Activated T-helper 1 cell treated with anti-CD3 and anti-CD28 coated beads, Interleukin-12 subunit alpha, Interleukin-12 subunit beta, Interleukin-2, Interleukin-4 antibody, amounts not matched to agents 30 ng/mL and 10 ng/mL and 1 ng/mL, durations not matched to agents 14 hours and 24 hours and 36 hours (primary cell): ENCODE measurements at regions of chr4 and their contacts with region 1.

Region 1: DNA sequence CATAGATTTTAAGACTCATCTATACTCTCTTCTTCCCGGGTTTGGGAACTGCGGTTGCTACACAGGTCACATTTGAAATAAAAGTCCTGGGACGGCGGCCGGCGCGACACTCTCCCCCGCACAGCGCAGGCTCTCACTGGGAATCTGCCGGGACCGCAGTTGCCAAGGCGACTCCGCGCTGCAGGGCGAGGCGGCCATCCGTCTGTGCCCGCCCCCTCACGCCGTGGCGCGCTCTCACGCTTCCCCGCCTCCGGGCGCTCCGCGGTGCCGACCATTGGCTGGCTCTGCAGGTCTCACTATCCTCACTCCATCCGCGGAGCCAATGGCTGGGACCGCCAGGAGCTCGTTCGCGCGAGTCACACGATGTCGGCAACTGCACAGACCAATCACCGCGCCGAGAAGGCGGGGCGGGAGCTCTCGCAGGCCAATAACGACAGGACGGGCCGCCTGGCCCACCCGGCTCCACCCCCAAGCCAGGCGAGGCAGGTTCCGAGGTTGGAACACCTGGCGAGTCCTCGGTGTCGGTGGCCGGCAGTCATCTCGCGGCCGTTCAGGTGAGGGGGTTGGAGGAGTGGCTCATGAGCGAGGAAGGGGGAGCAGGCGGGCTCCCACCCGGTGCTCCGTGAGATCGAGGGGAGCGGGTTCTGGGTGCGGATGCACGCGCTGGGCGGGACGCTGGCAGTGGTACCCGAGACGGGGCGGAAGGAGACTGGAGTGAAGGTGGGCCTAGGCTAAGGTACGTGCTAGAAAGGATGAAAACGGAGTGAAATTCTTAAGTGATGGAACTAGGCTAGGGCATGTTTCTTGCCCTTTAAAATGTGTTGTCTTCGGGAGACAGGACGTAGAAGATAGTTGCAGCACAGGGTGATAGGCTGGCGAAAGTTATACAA is at the start of gene MSMO1:
- DNase-seq: peak; percentile 99
- H3K4me3 Mint-ChIP-seq: no peak within 1 kb of the TSS
- H3K27ac Mint-ChIP-seq: no peak within 1 kb of the TSS
- H3K4me1 Mint-ChIP-seq: peaks cover 40% of the 10 kb centered on the region
- H3K27me3 Mint-ChIP-seq: no peaks in the 10 kb centered on the region
- total RNA-seq, gene MSMO1: 74.1 and 93.1 TPM in 2 replicates

Region 2: GRCh38 chr4:163494360-163495162 is 1832.9 kb before region 1 on chr4 and contains the start of gene TMA16:
- intact Hi-C with region 1: loop called (anchors 10 kb)
- DNase-seq: peak; percentile 84
- H3K4me3 Mint-ChIP-seq: peak within 1 kb of the TSS; percentile 90
- H3K27ac Mint-ChIP-seq: peak within 1 kb of the TSS; percentile 98
- H3K4me1 Mint-ChIP-seq: peaks cover 23% of the 10 kb centered on the region
- H3K27me3 Mint-ChIP-seq: peaks cover 3% of the 10 kb centered on the region
- total RNA-seq, gene TMA16: 76.3 and 80.8 TPM in 2 replicates

Region 3: DNA sequence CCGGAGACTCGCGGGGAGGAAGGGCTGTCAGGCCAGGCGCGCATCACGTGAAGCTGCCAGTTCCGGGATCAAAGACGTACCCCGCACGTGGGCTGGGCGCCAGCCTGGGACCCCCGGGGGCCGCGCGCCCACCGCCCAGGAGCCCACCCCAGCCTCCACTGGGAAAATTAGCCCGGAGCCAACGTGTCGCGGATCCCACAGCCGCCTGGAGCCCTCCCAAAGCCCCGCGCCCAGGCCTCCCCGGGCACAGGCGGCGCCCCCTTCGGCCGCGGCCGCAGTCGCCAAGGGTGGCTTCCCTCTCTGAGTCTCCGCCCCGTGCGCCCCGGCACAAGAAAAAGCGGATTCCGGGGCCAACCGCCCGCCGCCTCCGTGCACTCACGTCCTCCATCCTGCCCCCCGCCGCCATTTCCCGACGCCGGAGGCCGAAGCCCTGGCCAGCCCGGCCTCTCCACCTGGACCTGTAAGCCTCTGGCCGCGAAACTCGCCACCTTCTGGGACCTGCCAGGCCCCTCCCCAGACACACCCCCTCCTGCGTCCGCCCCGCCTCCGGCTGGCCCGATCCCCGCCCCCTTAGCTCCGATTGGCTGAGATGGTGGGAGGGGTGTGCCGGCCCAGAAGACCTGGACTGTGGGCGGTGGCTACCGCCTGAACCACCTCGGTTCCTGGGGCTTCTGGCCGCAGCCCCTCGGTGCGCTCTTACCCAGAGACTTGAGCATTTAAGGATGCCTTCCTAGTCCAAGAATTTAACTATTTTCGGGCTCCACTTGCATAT is 214.9 kb before region 1 on chr4 and contains the start of gene TMEM192:
- intact Hi-C with region 1: loop called (anchors 1 kb)
- DNase-seq: peak; percentile 87
- H3K4me3 Mint-ChIP-seq: peak within 1 kb of the TSS; percentile 91
- H3K27ac Mint-ChIP-seq: peak within 1 kb of the TSS; percentile 86
- H3K4me1 Mint-ChIP-seq: peaks cover 12% of the 10 kb centered on the region
- H3K27me3 Mint-ChIP-seq: peaks cover 7% of the 10 kb centered on the region
- total RNA-seq, gene TMEM192: 8.1 and 10.5 TPM in 2 replicates

Region 4: GRCh38 chr4:165131247-165131832 is 196.1 kb before region 1 on chr4:
- intact Hi-C with region 1: loop called (anchors 1 kb)
- DNase-seq: peak; percentile 65
- H3K4me3 Mint-ChIP-seq: no peak overlapping the region
- H3K27ac Mint-ChIP-seq: no peak overlapping the region
- H3K4me1 Mint-ChIP-seq: peaks cover 18% of the 10 kb centered on the region
- H3K27me3 Mint-ChIP-seq: peaks cover 5% of the 10 kb centered on the region

Region 5: GRCh38 chr4:165288639-165289422 is 38.6 kb before region 1 on chr4:
- intact Hi-C with region 1: loop called (anchors 2 kb)
- DNase-seq: no peak
- H3K4me3 Mint-ChIP-seq: peak overlapping the region; percentile 17
- H3K27ac Mint-ChIP-seq: peak overlapping the region; percentile 35
- H3K4me1 Mint-ChIP-seq: peaks cover 44% of the 10 kb centered on the region
- H3K27me3 Mint-ChIP-seq: no peaks in the 10 kb centered on the region

Region 6: DNA sequence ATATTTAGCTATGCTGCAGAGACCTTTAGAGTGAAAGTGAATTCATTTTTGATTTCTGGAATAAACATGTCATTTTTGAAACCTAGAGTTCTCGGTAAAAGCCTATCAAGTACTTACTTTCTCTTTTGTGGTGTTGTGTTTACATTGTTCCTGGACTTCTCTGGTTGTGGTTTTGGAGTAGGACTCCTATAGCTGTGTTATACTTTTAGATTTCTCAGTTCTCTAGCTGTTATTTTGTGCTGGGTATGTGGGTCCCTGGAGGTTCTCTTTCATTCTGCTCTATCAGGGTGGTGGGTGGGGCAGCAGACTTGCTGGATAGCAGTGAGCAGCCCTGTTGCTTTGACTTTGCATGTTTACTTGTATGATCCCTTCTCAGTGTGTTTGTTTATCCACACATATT is 25.6 kb before region 1 on chr4:
- intact Hi-C with region 1: loop called (anchors 1 kb)
- DNase-seq: no peak
- H3K4me3 Mint-ChIP-seq: peak overlapping the region; percentile 73
- H3K27ac Mint-ChIP-seq: peak overlapping the region; percentile 74
- H3K4me1 Mint-ChIP-seq: peaks cover 33% of the 10 kb centered on the region
- H3K27me3 Mint-ChIP-seq: no peaks in the 10 kb centered on the region